ENCODE measurements at regions of chr4 and their contacts with region 1.

Region 1: DNA sequence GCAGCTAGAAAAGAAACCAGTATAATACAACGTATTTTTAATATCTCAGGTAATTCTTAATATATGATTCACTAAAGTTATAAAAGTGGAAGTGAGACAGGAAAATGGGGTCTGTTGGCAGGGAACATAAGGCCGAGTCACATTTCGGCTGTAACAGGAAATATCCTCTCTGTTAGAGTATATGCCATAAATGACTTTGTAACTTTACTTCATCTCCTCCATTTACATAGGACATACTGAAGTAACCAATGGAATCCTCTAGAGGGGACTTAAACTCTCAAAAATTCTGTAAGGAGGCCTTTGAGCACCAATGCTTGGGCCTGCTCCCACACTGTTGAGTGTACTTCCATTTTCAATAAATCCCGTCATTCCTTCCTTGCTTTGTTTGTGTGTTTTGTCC is 71.3 kb downstream of the ANKRD17 start:
- DNase-seq: no peak
- ATAC-seq: no peak
- H3K4me3 ChIP-seq: no peak overlapping the region
- H3K4me3 Mint-ChIP-seq: no peak overlapping the region
- H3K27ac ChIP-seq: no peak overlapping the region
- H3K27ac Mint-ChIP-seq: no peak overlapping the region
- H3K4me1 ChIP-seq: no peaks in the 10 kb centered on the region
- H3K4me1 Mint-ChIP-seq: peaks cover 46% of the 10 kb centered on the region
- H3K27me3 ChIP-seq: no peaks in the 10 kb centered on the region
- H3K27me3 Mint-ChIP-seq: no peaks in the 10 kb centered on the region
- CTCF ChIP-seq: no peak

Region 2: DNA sequence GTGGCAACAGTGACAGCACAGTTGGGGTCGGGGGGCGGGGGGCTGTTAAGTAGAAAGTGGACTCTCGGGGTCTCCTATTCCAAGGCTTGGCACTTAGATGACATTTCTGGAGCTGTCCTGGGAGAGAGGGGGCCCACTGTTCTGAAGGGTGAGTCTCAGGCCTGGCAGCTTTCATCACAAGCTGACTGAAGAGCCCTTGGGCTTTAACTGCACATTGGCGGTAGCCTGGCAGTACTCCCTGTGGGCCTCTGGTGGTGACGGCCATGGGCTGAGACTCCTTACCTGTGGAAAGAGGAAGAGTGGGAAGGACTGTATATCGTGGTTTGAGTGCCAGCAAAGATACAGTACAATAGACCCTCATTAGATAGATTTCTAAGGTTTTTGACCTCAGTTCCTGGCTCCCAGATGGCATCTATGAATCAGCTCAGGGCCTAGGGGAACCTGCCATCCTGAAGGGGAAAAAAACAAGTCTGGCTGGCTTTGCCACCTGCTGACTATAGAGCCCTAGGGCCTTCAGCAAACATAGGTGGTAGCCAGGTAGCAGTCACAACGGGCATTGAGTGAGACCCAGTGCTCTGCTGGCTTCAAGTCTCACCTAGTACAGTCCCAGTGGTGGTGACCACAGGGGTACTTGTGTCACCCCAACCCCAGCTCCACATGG is 16.7 kb before region 1 on chr4:
- CTCF ChIA-PET with region 1: no interaction called
- POLR2A ChIA-PET with region 1: no interaction called
- intact Hi-C with region 1: loop called in 1 of 2 experiments (anchors 2 kb)
- DNase-seq: no peak
- ATAC-seq: no peak
- H3K4me3 ChIP-seq: no peak overlapping the region
- H3K4me3 Mint-ChIP-seq: no peak overlapping the region
- H3K27ac ChIP-seq: no peak overlapping the region
- H3K27ac Mint-ChIP-seq: no peak overlapping the region
- H3K4me1 ChIP-seq: no peaks in the 10 kb centered on the region
- H3K4me1 Mint-ChIP-seq: peaks cover 22% of the 10 kb centered on the region
- H3K27me3 ChIP-seq: no peaks in the 10 kb centered on the region
- H3K27me3 Mint-ChIP-seq: no peaks in the 10 kb centered on the region
- CTCF ChIP-seq: no peak

Region 3: GRCh38 chr4:73208376-73208775 is 21.1 kb after region 1 on chr4:
- CTCF ChIA-PET with region 1: no interaction called
- POLR2A ChIA-PET with region 1: no interaction called
- intact Hi-C with region 1: loop called in 1 of 2 experiments (anchors 2 kb)
- DNase-seq: no peak
- ATAC-seq: no peak
- H3K4me3 ChIP-seq: no peak overlapping the region
- H3K4me3 Mint-ChIP-seq: no peak overlapping the region
- H3K27ac ChIP-seq: no peak overlapping the region
- H3K27ac Mint-ChIP-seq: no peak overlapping the region
- H3K4me1 ChIP-seq: no peaks in the 10 kb centered on the region
- H3K4me1 Mint-ChIP-seq: peaks cover 49% of the 10 kb centered on the region
- H3K27me3 ChIP-seq: no peaks in the 10 kb centered on the region
- H3K27me3 Mint-ChIP-seq: no peaks in the 10 kb centered on the region
- CTCF ChIP-seq: no peak

Region 4: DNA sequence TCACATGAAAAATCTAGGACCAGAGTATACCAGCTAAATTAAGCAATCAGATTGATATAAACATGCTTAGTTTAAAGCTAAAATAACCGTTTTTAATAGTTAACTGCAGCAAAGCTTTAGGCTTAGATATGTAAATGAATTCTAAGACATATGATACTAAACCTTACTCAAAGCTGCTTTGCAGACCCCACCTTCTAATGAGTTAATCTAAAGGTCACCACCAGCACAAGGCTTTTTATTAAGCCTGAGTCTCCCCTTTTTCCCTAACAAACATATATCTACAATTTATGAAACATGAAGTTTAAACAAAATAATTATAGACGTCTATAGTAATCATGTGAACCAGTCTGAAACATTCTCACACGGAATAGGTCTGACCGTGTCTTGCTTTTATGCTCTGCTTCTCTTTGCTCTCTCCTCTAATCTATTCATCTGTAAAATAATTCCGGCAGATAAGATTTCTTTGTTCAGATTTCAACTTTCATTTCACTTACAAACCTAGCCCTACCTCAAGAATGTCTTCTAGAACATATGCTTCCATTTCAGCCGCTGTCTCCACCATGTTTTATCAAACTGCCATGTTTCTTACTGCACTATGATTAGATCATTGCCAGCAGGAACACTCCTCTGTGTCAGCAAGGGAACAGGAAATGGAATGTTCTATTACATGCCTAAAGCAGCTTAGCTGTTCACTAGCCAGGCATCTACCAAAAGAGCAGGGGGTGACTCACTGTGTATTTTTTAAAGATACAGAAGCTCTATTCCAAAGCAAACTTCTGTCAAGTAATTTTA is 35.3 kb after region 1 on chr4:
- CTCF ChIA-PET with region 1: no interaction called
- POLR2A ChIA-PET with region 1: no interaction called
- intact Hi-C with region 1: loop called in 1 of 2 experiments (anchors 5 kb)
- DNase-seq: peak; percentile 12 to 89 (median 52)
- ATAC-seq: peak; percentile 100
- H3K4me3 ChIP-seq: peak overlapping the region; percentile 50 to 59
- H3K4me3 Mint-ChIP-seq: no peak overlapping the region
- H3K27ac ChIP-seq: peak overlapping the region; percentile 71 to 86
- H3K27ac Mint-ChIP-seq: no peak overlapping the region
- H3K4me1 ChIP-seq: peaks cover 20% of the 10 kb centered on the region
- H3K4me1 Mint-ChIP-seq: peaks cover 41% of the 10 kb centered on the region
- H3K27me3 ChIP-seq: no peaks in the 10 kb centered on the region
- H3K27me3 Mint-ChIP-seq: no peaks in the 10 kb centered on the region
- CTCF ChIP-seq: no peak

Region 5: GRCh38 chr4:73406548-73406875 is 219.2 kb after region 1 on chr4:
- CTCF ChIA-PET with region 1: no interaction called
- POLR2A ChIA-PET with region 1: no interaction called
- intact Hi-C with region 1: no loop called
- DNase-seq: no peak
- ATAC-seq: no peak
- H3K4me3 ChIP-seq: no peak overlapping the region
- H3K4me3 Mint-ChIP-seq: no peak overlapping the region
- H3K27ac ChIP-seq: no peak overlapping the region
- H3K27ac Mint-ChIP-seq: no peak overlapping the region
- H3K4me1 ChIP-seq: no peaks in the 10 kb centered on the region
- H3K4me1 Mint-ChIP-seq: no peaks in the 10 kb centered on the region
- H3K27me3 ChIP-seq: no peaks in the 10 kb centered on the region
- H3K27me3 Mint-ChIP-seq: no peaks in the 10 kb centered on the region
- CTCF ChIP-seq: no peak